ENCODE measurements at regions of chr10 and their contacts with region 1.

Region 1: GRCh38 chr10:78543749-78544362 is 510.2 kb downstream of the RPS24 start:
- DNase-seq: peak; percentile 89
- ATAC-seq: peak; percentile 88
- H3K4me3 ChIP-seq: no peak overlapping the region
- H3K27ac ChIP-seq: peak overlapping the region in 1 of 2 donors; percentile 20
- H3K4me1 ChIP-seq: peaks cover 0 to 3% of the 10 kb centered on the region in 2 donors
- H3K27me3 ChIP-seq: no peaks in the 10 kb centered on the region

Region 2: GRCh38 chr10:78442836-78443550 is 100.9 kb before region 1 on chr10:
- intact Hi-C with region 1: loop called in 1 of 2 experiments (anchors 5 kb)
- DNase-seq: no peak
- ATAC-seq: peak; percentile 13
- H3K4me3 ChIP-seq: no peak overlapping the region
- H3K27ac ChIP-seq: no peak overlapping the region
- H3K4me1 ChIP-seq: no peaks in the 10 kb centered on the region
- H3K27me3 ChIP-seq: no peaks in the 10 kb centered on the region